ENCODE measurements at regions of chr3 and their contacts with region 1.

Region 1: GRCh38 chr3:187679638-187680396 is 9.6 kb upstream of the SST start:
- DNase-seq: peak; percentile 70
- H3K27ac ChIP-seq: no peak overlapping the region
- CTCF ChIP-seq: peak; percentile 91

Region 2: GRCh38 chr3:187223799-187224198 is 456.0 kb before region 1 on chr3:
- CTCF ChIA-PET with region 1: interaction called, 18 read pairs
- POLR2A ChIA-PET with region 1: no interaction called
- DNase-seq: peak; percentile 53
- H3K27ac ChIP-seq: no peak overlapping the region
- CTCF ChIP-seq: no peak

Region 3: GRCh38 chr3:187319699-187320302 is 360.0 kb before region 1 on chr3:
- CTCF ChIA-PET with region 1: interaction called, 177 read pairs
- POLR2A ChIA-PET with region 1: no interaction called
- DNase-seq: peak; percentile 17
- H3K27ac ChIP-seq: no peak overlapping the region
- CTCF ChIP-seq: no peak; the same call in 1 of the 2 replicates

Region 4: GRCh38 chr3:187616307-187616972 is 63.4 kb before region 1 on chr3:
- CTCF ChIA-PET with region 1: interaction called, 31 read pairs
- POLR2A ChIA-PET with region 1: no interaction called
- DNase-seq: peak; percentile 61
- H3K27ac ChIP-seq: no peak overlapping the region
- CTCF ChIP-seq: peak; percentile 63

Region 5: GRCh38 chr3:187640569-187641059 is 39.2 kb before region 1 on chr3:
- CTCF ChIA-PET with region 1: no interaction called
- POLR2A ChIA-PET with region 1: no interaction called
- DNase-seq: no peak
- H3K27ac ChIP-seq: no peak overlapping the region
- CTCF ChIP-seq: no peak

Region 6: DNA sequence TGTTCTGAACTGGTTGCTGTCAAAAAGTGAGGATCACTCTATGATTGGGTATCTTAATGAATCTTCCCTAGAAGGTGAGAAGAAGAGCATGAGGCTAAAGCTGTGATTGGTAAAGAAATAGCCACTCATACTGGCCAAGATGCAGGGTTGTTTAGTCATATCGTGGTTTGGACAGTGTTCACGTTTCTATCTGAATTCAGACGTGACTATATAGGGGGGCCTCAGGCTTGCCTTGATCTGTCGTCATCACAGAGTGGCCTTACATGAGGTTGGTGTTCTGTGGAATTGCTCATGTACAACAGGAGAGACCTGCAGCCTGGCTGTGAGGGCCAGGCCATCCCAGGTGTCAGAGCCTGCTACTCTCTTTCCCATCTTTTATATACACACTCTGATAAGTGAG is 10.2 kb after region 1 on chr3:
- CTCF ChIA-PET with region 1: interaction called, 10 read pairs
- POLR2A ChIA-PET with region 1: no interaction called
- DNase-seq: no peak
- H3K27ac ChIP-seq: no peak overlapping the region
- CTCF ChIP-seq: no peak

Measured in RWPE1 (cell line).